ENCODE measurements at regions of chr1 and their contacts with region 1.

Region 1: GRCh38 chr1:40849801-40850592 is 12.2 kb downstream of the CITED4 start:
- DNase-seq: peak; percentile 74
- H3K4me3 ChIP-seq: no peak overlapping the region
- H3K27ac ChIP-seq: no peak overlapping the region
- H3K4me1 ChIP-seq: peaks cover 2 to 4% (median 3%) of the 10 kb centered on the region in 4 donors
- H3K27me3 ChIP-seq: no peaks in the 10 kb centered on the region
- CTCF ChIP-seq: peak; percentile 86 to 93 (median 91)
- EP300 ChIP-seq: no peak
- POLR2A ChIP-seq: no peak

Region 2: GRCh38 chr1:40606978-40607377 is 243.0 kb before region 1 on chr1:
- in situ Hi-C with region 1: loop called (anchors 10 to 25 kb)
- intact Hi-C with region 1: loop called (anchors 5 kb)
- DNase-seq: no peak
- H3K4me3 ChIP-seq: no peak overlapping the region
- H3K27ac ChIP-seq: no peak overlapping the region
- H3K4me1 ChIP-seq: no peaks in the 10 kb centered on the region
- H3K27me3 ChIP-seq: no peaks in the 10 kb centered on the region
- CTCF ChIP-seq: no peak
- EP300 ChIP-seq: no peak
- POLR2A ChIP-seq: no peak

Region 3: DNA sequence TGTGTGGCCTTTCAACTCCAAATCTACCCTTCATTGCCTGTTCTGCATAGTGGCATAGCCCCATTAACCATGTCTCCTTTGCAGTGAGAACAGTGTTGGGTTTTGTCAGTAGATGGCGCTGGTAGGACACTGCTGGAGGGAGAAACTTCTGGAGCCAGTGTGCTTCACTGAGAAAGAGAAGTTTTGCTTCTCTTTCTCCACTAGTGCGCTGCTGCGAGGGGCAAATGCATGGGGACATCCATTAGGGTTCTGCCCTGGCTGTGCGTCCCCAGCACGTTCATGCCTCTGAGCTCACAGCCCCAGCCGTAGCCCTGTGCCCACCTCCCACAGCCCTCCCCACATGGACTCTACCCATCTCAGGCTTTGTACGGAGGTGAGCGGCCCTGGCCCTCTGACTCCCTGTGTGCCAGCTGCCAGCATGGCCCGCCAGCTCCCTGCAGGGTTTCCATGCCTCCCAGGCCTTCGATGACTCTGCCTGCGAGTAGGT is 237.6 kb before region 1 on chr1:
- in situ Hi-C with region 1: loop called (anchors 10 to 25 kb)
- intact Hi-C with region 1: loop called (anchors 5 kb)
- DNase-seq: peak; percentile 80
- H3K4me3 ChIP-seq: no peak overlapping the region
- H3K27ac ChIP-seq: no peak overlapping the region
- H3K4me1 ChIP-seq: peaks cover 0 to 9% (median 2%) of the 10 kb centered on the region in 4 donors
- H3K27me3 ChIP-seq: no peaks in the 10 kb centered on the region
- CTCF ChIP-seq: peak; percentile 76 to 81 (median 79)
- EP300 ChIP-seq: no peak
- POLR2A ChIP-seq: no peak

Region 4: DNA sequence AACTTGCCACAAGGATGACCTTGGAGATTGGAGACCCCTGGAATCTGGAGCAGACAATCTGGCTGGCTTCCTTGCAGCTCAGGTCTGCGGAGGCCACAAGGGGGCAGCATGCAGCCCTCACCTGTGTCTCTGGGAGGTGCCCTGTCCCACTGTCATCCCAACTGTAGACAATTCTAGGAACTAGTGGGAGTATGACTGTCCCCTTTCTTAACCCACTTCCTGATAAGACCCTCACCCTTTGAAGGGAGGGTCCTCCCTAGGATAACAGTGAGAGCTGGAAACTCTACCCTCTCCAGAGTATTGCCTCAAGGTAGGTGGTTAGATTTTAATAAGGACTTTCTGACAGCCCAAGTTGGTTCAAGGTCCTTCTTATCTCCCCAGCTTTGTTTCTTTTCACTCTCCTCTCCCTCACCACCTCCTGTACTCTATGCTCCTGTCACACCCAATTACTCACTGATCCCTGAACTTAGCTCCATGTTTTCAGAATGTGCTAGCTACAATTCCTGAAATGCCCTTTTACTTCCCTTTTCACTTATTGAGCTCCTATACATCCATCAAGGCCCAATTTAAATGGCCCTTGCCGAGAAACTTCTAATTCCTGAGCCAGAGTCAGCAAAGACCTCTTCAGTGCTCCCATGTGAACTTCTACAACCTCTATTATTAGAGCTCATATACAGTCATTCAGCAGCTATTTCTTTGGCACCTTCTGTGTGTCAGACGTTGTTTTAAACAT is 75.6 kb before region 1 on chr1:
- in situ Hi-C with region 1: loop called in 1 of 4 experiments (anchors 10 kb)
- intact Hi-C with region 1: loop called (anchors 5 kb)
- DNase-seq: peak; percentile 72
- H3K4me3 ChIP-seq: no peak overlapping the region
- H3K27ac ChIP-seq: no peak overlapping the region
- H3K4me1 ChIP-seq: peaks cover 3 to 6% (median 4%) of the 10 kb centered on the region in 4 donors
- H3K27me3 ChIP-seq: no peaks in the 10 kb centered on the region
- CTCF ChIP-seq: peak; percentile 72 to 84 (median 82)
- EP300 ChIP-seq: no peak
- POLR2A ChIP-seq: no peak

Region 5: GRCh38 chr1:40951943-40952743 is 102.1 kb after region 1 on chr1:
- in situ Hi-C with region 1: loop called (anchors 5 to 10 kb)
- intact Hi-C with region 1: loop called (anchors 5 kb)
- DNase-seq: peak; percentile 77
- H3K4me3 ChIP-seq: no peak overlapping the region
- H3K27ac ChIP-seq: no peak overlapping the region
- H3K4me1 ChIP-seq: peaks cover 4 to 15% (median 8%) of the 10 kb centered on the region in 4 donors
- H3K27me3 ChIP-seq: peaks cover 3% of the 10 kb centered on the region
- CTCF ChIP-seq: peak; percentile 86 to 92 (median 89)
- EP300 ChIP-seq: no peak
- POLR2A ChIP-seq: no peak

Region 6: GRCh38 chr1:40997096-40997495 is 147.1 kb after region 1 on chr1:
- in situ Hi-C with region 1: no loop called
- intact Hi-C with region 1: no loop called
- DNase-seq: no peak
- H3K4me3 ChIP-seq: no peak overlapping the region
- H3K27ac ChIP-seq: no peak overlapping the region
- H3K4me1 ChIP-seq: peaks cover 0 to under 1% (median 0%) of the 10 kb centered on the region in 4 donors
- H3K27me3 ChIP-seq: no peaks in the 10 kb centered on the region
- CTCF ChIP-seq: no peak
- EP300 ChIP-seq: no peak
- POLR2A ChIP-seq: no peak

Measured in transverse colon (tissue), 4 donors.